Vagina (tissue), 2 donors: ENCODE measurements at regions of chr13 and their contacts with region 1.

Region 1: DNA sequence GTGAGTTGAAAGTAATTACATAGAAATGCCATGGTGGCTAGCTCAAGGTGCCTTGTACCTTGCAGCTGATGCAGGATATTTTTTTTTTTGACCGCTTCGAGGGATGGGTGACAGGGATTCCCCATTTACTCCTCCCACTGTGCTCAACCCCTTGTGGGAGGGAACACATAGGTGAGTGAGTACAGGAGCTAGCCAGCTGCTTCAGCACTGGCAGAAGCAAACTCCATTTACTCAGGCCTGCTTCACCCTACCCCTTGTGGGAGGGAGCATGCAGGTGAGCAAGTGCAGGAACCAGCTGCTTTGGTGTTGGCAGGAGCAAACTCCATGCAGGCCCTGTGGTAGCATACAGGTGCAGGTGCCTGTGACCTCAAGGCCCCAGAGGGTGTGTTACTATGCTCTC is 330.1 kb downstream of the TDRD3 start:
- DNase-seq: no peak
- H3K4me3 ChIP-seq: no peak overlapping the region
- H3K27ac ChIP-seq: no peak overlapping the region
- H3K4me1 ChIP-seq: no peaks in the 10 kb centered on the region
- H3K27me3 ChIP-seq: no peaks in the 10 kb centered on the region
- CTCF ChIP-seq: no peak
- POLR2A ChIP-seq: no peak

Region 2: DNA sequence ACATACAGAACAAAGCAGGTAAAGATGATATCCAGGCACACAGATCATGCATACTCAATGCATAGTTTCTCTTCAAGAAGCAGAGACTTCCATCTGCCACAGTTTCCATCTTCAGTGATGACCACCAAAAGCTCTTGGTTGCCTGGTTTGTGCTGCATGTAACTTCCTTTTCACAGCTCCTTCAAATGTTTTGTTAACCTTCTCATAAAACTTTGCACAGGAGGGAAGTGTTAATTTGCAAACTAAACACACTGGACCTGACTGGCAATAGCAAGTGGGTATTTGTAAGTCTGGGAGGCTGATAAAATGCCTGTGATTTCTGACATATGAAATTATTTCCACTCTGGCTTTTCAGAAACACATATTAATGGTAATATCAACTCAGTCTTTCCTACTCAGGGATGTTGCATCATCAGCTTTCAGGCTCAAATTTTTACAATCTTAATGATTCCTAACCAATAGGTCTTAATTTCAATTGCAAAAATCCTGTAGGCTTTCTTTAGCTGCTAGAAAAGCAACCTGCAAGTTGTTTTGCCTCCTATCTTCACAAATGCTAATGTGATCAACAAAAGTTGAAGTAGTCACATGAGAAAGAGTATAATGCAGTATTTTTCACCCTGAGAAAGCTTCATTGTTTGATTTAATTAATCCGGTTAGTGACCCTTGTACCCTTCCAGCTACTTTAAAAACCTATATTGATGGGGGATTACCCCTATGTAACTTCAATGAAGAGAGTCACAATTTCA is 1139.0 kb before region 1 on chr13:
- intact Hi-C with region 1: no loop called
- DNase-seq: no peak
- H3K4me3 ChIP-seq: no peak overlapping the region
- H3K27ac ChIP-seq: no peak overlapping the region
- H3K4me1 ChIP-seq: no peaks in the 10 kb centered on the region
- H3K27me3 ChIP-seq: no peaks in the 10 kb centered on the region
- CTCF ChIP-seq: no peak
- POLR2A ChIP-seq: no peak

Region 3: DNA sequence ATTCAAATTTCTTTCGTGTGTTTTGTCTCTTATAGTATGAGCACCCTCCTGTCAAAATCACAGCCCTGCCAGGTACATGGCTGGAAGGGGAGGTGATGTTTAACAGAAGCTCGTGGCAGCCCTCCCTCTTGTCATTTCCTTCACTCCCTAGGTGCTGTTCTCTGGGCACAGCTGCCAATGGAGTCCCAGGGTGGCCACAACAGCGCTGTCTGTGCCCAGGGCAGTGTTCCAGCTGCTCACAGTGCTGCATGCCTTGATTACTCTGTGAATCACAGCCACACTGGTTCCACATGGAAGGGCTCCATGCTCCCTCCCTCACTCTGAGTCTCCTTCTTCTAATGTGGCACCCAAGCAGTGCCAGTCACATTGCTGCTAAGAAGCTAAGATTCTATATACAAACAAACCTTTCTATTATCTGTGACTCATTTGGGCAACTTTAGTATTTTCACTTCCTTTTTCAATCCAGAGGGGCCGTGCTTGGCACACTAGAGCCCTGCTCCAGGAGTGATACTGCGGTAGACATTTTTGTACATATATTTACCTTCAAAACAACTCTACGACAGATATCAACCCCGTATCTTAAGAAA is 81.5 kb before region 1 on chr13:
- intact Hi-C with region 1: loop called (anchors 2 kb)
- DNase-seq: no peak
- H3K4me3 ChIP-seq: no peak overlapping the region
- H3K27ac ChIP-seq: no peak overlapping the region
- H3K4me1 ChIP-seq: no peaks in the 10 kb centered on the region
- H3K27me3 ChIP-seq: no peaks in the 10 kb centered on the region
- CTCF ChIP-seq: no peak
- POLR2A ChIP-seq: no peak